Activated CD4-positive, alpha-beta T cell treated with anti-CD3 and anti-CD28 coated beads, Interleukin-2, amount 10 ng/mL, durations not matched to agents 7 days and 5 days (primary cell): ENCODE measurements at regions of chr11 and their contacts with region 1.

Region 1: GRCh38 chr11:118051611-118052461 is 25.0 kb upstream of the TMPRSS4 start:
- DNase-seq: peak; percentile 86
- H3K4me3 Mint-ChIP-seq: peak overlapping the region; percentile 54
- H3K27ac Mint-ChIP-seq: peak overlapping the region; percentile 98
- H3K4me1 Mint-ChIP-seq: peaks cover 64% of the 10 kb centered on the region
- H3K27me3 Mint-ChIP-seq: no peaks in the 10 kb centered on the region

Region 2: GRCh38 chr11:117807482-117808327 is 244.1 kb before region 1 on chr11:
- CTCF ChIA-PET with region 1: interaction called, 17 read pairs
- POLR2A ChIA-PET with region 1: no interaction called
- DNase-seq: peak; percentile 80
- H3K4me3 Mint-ChIP-seq: no peak overlapping the region
- H3K27ac Mint-ChIP-seq: no peak overlapping the region
- H3K4me1 Mint-ChIP-seq: peaks cover 18% of the 10 kb centered on the region
- H3K27me3 Mint-ChIP-seq: peaks cover 10% of the 10 kb centered on the region

Region 3: GRCh38 chr11:117828611-117829368 is 223.0 kb before region 1 on chr11:
- CTCF ChIA-PET with region 1: interaction called, 20 read pairs
- POLR2A ChIA-PET with region 1: interaction called, 4 read pairs
- DNase-seq: peak; percentile 70
- H3K4me3 Mint-ChIP-seq: peak overlapping the region; percentile 13
- H3K27ac Mint-ChIP-seq: peak overlapping the region; percentile 82
- H3K4me1 Mint-ChIP-seq: peaks cover 58% of the 10 kb centered on the region
- H3K27me3 Mint-ChIP-seq: peaks cover 2% of the 10 kb centered on the region

Region 4: GRCh38 chr11:117907251-117907981 is 144.4 kb before region 1 on chr11:
- CTCF ChIA-PET with region 1: interaction called, 11 read pairs
- POLR2A ChIA-PET with region 1: no interaction called
- DNase-seq: peak; percentile 54
- H3K4me3 Mint-ChIP-seq: no peak overlapping the region
- H3K27ac Mint-ChIP-seq: no peak overlapping the region
- H3K4me1 Mint-ChIP-seq: peaks cover 11% of the 10 kb centered on the region
- H3K27me3 Mint-ChIP-seq: no peaks in the 10 kb centered on the region

Region 5: GRCh38 chr11:118002541-118003423 is 49.1 kb before region 1 on chr11:
- CTCF ChIA-PET with region 1: interaction called, 39 read pairs
- POLR2A ChIA-PET with region 1: interaction called, 3 read pairs
- DNase-seq: peak; percentile 60
- H3K4me3 Mint-ChIP-seq: peak overlapping the region; percentile 58
- H3K27ac Mint-ChIP-seq: peak overlapping the region; percentile 90
- H3K4me1 Mint-ChIP-seq: peaks cover 100% of the 10 kb centered on the region
- H3K27me3 Mint-ChIP-seq: no peaks in the 10 kb centered on the region